Right cardiac atrium (tissue), 5 donors: ENCODE measurements at regions of chr3 and their contacts with region 1.

Region 1: DNA sequence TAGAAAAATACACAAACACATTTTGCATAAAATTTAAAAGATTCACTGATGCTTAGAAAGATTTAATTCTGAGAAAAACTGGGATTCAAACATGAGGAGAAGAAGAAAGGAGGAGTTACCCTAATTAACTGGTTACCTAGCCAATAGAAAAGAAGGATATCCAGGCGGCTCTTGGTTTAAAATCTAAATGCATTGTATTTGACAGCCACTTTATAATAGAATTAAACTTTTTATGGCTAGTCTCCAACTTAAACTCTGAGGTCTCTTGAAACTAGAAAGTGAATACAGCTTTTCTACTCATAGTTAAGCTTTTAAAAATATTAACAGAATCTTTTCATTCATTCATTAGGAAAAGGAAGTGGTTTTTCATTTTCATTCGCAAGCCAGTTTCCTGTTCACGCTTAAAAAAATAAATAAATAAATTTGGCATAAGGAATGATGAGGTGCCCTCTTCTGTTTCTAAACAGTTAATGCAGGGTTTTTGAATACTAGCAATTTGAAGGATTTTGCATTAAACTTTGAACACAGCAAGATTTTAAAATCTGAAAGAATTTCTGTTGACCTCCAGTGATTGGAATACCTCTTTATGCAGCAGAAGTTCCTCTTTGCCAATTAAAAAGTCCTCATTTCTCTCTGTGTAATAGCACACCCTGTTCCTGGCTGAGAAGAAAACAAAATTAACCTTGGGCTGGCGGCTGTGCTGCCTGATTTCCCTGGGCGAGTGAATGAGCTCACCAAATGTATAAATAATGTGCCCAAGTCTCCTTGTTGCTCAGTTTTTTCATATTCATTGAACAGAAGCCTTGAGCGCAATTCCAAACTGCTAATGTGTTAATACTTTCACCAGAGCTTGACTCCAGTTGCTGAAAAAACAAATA is 105.1 kb downstream of the ZMAT3 start:
- DNase-seq: peak in 1 of 3 donors; percentile 36
- ATAC-seq: peak; percentile 28 to 48
- H3K4me3 ChIP-seq: peak overlapping the region; percentile 2
- H3K27ac ChIP-seq: no peak overlapping the region
- H3K4me1 ChIP-seq: no peaks in the 10 kb centered on the region
- H3K27me3 ChIP-seq: no peaks in the 10 kb centered on the region

Region 2: DNA sequence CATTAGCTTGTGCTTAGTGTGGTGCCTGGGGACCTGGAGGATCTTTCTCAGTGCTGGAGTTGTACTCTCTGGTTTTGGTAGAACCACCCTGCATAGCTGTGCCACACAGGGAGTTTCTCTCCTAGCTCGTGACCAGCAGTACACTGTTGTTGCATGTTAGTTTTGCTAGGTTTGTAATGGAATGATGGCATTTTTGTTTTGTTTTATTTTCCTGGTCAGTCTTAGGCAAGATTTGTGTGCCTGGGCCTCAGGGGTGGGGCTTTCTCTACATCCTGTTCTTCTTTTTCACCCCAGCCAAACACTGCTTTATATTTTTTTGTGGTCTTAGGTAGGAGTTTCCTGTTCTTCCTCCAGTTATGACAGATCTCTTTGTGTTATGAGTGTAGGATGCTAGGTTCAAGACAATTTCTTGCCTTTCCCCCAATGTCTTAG is 964.9 kb before region 1 on chr3:
- intact Hi-C with region 1: no loop called
- DNase-seq: peak in 1 of 3 donors; percentile 11
- ATAC-seq: no peak
- H3K4me3 ChIP-seq: no peak overlapping the region
- H3K27ac ChIP-seq: no peak overlapping the region
- H3K4me1 ChIP-seq: no peaks in the 10 kb centered on the region
- H3K27me3 ChIP-seq: no peaks in the 10 kb centered on the region

Region 3: GRCh38 chr3:178536211-178537079 is 430.1 kb before region 1 on chr3 and contains the start of gene KCNMB2:
- intact Hi-C with region 1: loop called in 1 of 4 experiments (anchors 10 kb)
- DNase-seq: no peak
- ATAC-seq: peak; percentile 82 to 84
- H3K4me3 ChIP-seq: peak within 1 kb of the TSS; percentile 79
- H3K27ac ChIP-seq: peak within 1 kb of the TSS; percentile 59
- H3K4me1 ChIP-seq: no peaks in the 10 kb centered on the region
- H3K27me3 ChIP-seq: no peaks in the 10 kb centered on the region
- total RNA-seq, gene KCNMB2: 4.5 to 10.0 (median 5.9) TPM